ENCODE measurements at regions of chr5 and their contacts with region 1.

Region 1: GRCh38 chr5:8923526-8923925 is 622.3 kb downstream of the SEMA5A start:
- DNase-seq: no peak
- H3K4me3 Mint-ChIP-seq: no peak overlapping the region
- H3K27ac Mint-ChIP-seq: no peak overlapping the region
- H3K4me1 Mint-ChIP-seq: no peaks in the 10 kb centered on the region
- H3K27me3 Mint-ChIP-seq: no peaks in the 10 kb centered on the region

Region 2: GRCh38 chr5:8897316-8897715 is 26.2 kb before region 1 on chr5:
- CTCF ChIA-PET with region 1: no interaction called
- intact Hi-C with region 1: no loop called
- DNase-seq: no peak
- H3K4me3 Mint-ChIP-seq: no peak overlapping the region
- H3K27ac Mint-ChIP-seq: no peak overlapping the region
- H3K4me1 Mint-ChIP-seq: no peaks in the 10 kb centered on the region
- H3K27me3 Mint-ChIP-seq: no peaks in the 10 kb centered on the region

Region 3: GRCh38 chr5:8934455-8934854 is 10.9 kb after region 1 on chr5:
- CTCF ChIA-PET with region 1: no interaction called
- intact Hi-C with region 1: loop called (anchors 1 kb)
- DNase-seq: no peak
- H3K4me3 Mint-ChIP-seq: no peak overlapping the region
- H3K27ac Mint-ChIP-seq: no peak overlapping the region
- H3K4me1 Mint-ChIP-seq: no peaks in the 10 kb centered on the region
- H3K27me3 Mint-ChIP-seq: no peaks in the 10 kb centered on the region

Region 4: GRCh38 chr5:9173281-9174048 is 249.9 kb after region 1 on chr5:
- CTCF ChIA-PET with region 1: no interaction called
- intact Hi-C with region 1: no loop called
- DNase-seq: no peak
- H3K4me3 Mint-ChIP-seq: no peak overlapping the region
- H3K27ac Mint-ChIP-seq: no peak overlapping the region
- H3K4me1 Mint-ChIP-seq: no peaks in the 10 kb centered on the region
- H3K27me3 Mint-ChIP-seq: no peaks in the 10 kb centered on the region

Region 5: DNA sequence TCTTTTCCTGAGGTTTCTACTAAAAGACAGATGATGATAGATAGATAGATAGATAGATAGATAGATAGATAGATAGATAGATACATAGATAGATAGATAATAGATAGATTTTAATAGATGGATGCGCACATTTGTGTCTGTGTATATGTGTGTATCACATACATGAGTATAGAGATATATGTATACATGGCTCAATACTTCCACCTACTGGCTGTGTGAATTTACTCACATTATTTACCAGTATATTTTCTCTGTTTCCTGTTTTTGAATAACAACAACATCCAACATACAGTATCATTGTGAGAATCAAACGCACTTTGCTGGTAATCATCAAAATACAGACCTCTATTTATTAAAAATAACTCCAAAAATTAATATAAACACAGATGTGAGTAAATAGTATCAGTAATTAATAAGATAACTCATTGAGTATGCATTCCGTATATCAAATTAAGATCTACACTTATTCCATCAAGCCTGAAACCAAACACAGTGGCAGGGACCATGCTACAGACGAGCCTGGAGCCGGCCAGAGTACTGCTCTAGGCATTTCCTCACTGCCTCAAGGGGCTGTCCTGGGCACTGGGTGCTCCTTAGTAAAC is 284.4 kb after region 1 on chr5:
- CTCF ChIA-PET with region 1: no interaction called
- intact Hi-C with region 1: no loop called
- DNase-seq: no peak
- H3K4me3 Mint-ChIP-seq: no peak overlapping the region
- H3K27ac Mint-ChIP-seq: no peak overlapping the region
- H3K4me1 Mint-ChIP-seq: no peaks in the 10 kb centered on the region
- H3K27me3 Mint-ChIP-seq: no peaks in the 10 kb centered on the region

Region 6: DNA sequence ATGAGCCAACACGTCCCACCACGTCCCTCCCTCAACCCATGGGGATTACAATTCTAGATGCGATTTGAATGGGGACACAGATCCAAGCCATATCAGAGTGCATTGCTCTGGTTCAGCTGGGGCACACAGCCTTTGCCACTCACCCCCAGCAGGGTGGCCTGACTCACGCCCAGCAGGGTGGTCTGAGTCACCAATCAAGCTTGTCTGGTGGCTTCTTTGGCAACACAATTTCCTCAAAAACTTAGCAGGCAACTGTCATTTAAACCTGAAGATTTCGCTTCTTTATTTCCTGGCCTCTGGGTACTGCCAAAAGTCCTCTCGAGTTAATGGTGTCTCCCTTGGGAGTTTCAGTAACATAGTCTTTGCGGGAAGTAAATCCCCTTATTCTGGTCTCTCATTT is 638.6 kb after region 1 on chr5:
- CTCF ChIA-PET with region 1: no interaction called
- intact Hi-C with region 1: no loop called
- DNase-seq: no peak
- H3K4me3 Mint-ChIP-seq: no peak overlapping the region
- H3K27ac Mint-ChIP-seq: no peak overlapping the region
- H3K4me1 Mint-ChIP-seq: no peaks in the 10 kb centered on the region
- H3K27me3 Mint-ChIP-seq: no peaks in the 10 kb centered on the region